PC-9 (cell line): ENCODE measurements at regions of chr12 and their contacts with region 1.

Region 1: GRCh38 chr12:113778432-113779132 is 187.5 kb downstream of the RBM19 start:
- DNase-seq: no peak
- H3K4me3 ChIP-seq: no peak overlapping the region
- H3K27ac ChIP-seq: no peak overlapping the region
- H3K4me1 ChIP-seq: no peaks in the 10 kb centered on the region
- H3K27me3 ChIP-seq: peaks cover 10% of the 10 kb centered on the region; the same call in 1 of the 2 replicates
- CTCF ChIP-seq: no peak

Region 2: GRCh38 chr12:113727651-113728061 is 50.9 kb before region 1 on chr12:
- CTCF ChIA-PET with region 1: no interaction called
- POLR2A ChIA-PET with region 1: no interaction called
- intact Hi-C with region 1: no loop called
- DNase-seq: peak; percentile 67 to 88
- H3K4me3 ChIP-seq: no peak overlapping the region
- H3K27ac ChIP-seq: no peak overlapping the region
- H3K4me1 ChIP-seq: peaks cover 18% of the 10 kb centered on the region
- H3K27me3 ChIP-seq: no peaks in the 10 kb centered on the region
- CTCF ChIP-seq: no peak; the same call in 1 of the 2 replicates

Region 3: GRCh38 chr12:113820842-113821241 is 42.3 kb after region 1 on chr12:
- CTCF ChIA-PET with region 1: no interaction called
- POLR2A ChIA-PET with region 1: interaction called, 17 read pairs
- intact Hi-C with region 1: no loop called
- DNase-seq: no peak
- H3K4me3 ChIP-seq: no peak overlapping the region
- H3K27ac ChIP-seq: no peak overlapping the region
- H3K4me1 ChIP-seq: no peaks in the 10 kb centered on the region
- H3K27me3 ChIP-seq: no peaks in the 10 kb centered on the region
- CTCF ChIP-seq: no peak

Region 4: DNA sequence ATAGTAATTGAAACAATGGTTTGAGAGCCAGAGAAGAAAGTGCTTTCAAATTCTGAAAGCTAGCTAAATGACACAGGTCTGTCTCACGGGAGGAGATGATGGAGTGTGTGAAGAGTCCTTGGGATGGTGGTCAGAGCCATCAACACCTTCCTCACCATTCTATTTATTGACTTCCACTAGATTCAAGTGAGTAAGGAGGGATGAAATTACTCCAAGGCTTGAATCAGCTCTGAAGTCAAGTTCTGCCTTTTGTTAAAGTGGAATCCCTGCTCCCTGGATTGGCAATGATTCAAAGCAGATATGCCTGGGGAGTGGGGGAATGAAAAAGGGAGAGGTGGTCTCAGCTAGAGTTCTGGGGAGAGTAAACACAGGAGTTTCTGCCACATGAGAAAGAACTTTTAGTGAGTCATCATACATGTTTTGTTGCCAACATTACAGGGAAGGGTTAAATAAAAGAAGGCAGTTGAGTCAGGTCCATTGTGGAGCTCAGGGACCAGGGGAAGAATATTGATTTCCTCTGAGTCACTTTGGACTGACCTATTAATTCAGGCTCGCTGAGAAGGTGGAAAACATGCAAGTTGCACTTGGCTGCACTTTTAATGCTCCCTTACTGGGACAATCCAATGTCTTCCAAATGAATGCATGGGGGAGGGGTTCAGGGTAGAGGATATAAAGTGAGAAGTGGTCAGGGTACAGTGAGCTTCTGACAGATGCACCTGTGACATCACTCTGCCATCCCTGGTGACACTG is 484.6 kb after region 1 on chr12:
- CTCF ChIA-PET with region 1: no interaction called
- POLR2A ChIA-PET with region 1: no interaction called
- intact Hi-C with region 1: no loop called
- DNase-seq: no peak
- H3K4me3 ChIP-seq: no peak overlapping the region
- H3K27ac ChIP-seq: no peak overlapping the region
- H3K4me1 ChIP-seq: no peaks in the 10 kb centered on the region
- H3K27me3 ChIP-seq: no peaks in the 10 kb centered on the region
- CTCF ChIP-seq: no peak

Region 5: DNA sequence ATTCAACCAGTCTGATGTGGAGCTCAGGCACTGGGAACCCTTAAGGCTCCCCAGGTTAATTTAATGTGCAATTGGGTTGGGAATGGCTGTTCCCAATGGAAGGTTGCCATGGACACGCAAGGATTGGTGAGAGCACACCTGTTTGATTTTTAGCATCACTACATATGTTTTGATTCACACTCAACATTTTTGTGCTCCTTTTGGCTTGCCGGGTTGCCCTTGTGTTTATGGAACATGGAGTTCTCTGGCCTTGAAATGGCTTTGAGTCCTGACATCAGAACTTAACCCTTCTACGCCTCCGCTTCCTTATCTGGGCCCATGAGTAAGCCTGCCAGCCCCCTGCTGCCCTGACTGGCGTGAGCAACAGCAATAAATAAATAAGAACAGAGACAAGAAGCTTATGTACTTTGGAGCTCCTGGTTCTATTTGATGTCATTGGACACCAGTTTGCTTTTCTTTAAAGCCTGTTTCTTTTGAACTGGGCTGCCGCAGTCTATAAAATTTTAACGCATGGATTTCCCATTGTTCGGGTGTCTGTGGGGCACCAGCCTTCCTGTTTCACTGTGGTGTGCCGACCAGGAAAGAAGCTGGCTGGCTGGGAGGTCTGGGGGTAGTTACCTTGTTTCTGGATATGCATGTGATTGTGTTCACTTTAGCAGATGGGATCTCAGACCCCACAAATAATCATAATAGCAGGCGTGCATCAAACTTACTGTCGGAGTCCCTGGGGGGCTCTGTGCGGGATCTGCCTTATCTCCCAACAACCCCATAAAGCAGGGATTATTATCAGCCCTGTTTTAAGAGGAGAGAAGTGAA is 877.6 kb after region 1 on chr12:
- CTCF ChIA-PET with region 1: no interaction called
- POLR2A ChIA-PET with region 1: no interaction called
- intact Hi-C with region 1: no loop called
- DNase-seq: no peak
- H3K4me3 ChIP-seq: no peak overlapping the region
- H3K27ac ChIP-seq: no peak overlapping the region
- H3K4me1 ChIP-seq: no peaks in the 10 kb centered on the region
- H3K27me3 ChIP-seq: peaks cover 38% of the 10 kb centered on the region
- CTCF ChIP-seq: no peak